A673 (cell line): ENCODE measurements at regions of chr11 and their contacts with region 1.

Region 1: DNA sequence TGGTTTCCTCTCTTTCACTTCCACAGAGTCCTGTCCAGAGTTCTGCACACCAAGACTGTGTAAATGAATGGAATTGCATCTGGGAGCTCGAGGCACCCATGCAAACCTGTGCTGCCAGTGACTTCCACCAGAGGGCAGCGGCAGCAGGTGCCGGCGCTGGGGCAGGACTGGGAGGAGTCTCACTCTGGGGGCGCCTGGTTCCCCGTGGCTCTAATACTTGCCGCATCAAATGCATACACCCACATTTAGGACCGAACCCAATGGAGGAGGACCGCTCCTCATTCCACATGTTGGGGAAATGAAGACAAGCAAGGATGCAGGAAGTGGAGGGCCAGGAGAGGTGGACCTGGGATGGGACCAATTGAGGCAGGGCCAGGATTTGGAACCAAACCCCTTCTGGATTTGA is 1.1 kb upstream of the CD6 start:
- DNase-seq: peak; percentile 70
- H3K4me3 ChIP-seq: no peak overlapping the region
- H3K27ac ChIP-seq: no peak overlapping the region
- H3K4me1 ChIP-seq: no peaks in the 10 kb centered on the region
- H3K27me3 ChIP-seq: no peaks in the 10 kb centered on the region
- CTCF ChIP-seq: peak; percentile 99

Region 2: GRCh38 chr11:61129639-61130523 is 159.5 kb after region 1 on chr11:
- CTCF ChIA-PET with region 1: interaction called, 3 read pairs
- POLR2A ChIA-PET with region 1: no interaction called
- intact Hi-C with region 1: loop called (anchors 1 kb)
- DNase-seq: peak; percentile 92
- H3K4me3 ChIP-seq: no peak overlapping the region
- H3K27ac ChIP-seq: no peak overlapping the region
- H3K4me1 ChIP-seq: peaks cover 4% of the 10 kb centered on the region
- H3K27me3 ChIP-seq: no peaks in the 10 kb centered on the region
- CTCF ChIP-seq: peak; percentile 100